CD8-positive, alpha-beta memory T cell (primary cell): ENCODE measurements at regions of chr5 and their contacts with region 1.

Region 1: DNA sequence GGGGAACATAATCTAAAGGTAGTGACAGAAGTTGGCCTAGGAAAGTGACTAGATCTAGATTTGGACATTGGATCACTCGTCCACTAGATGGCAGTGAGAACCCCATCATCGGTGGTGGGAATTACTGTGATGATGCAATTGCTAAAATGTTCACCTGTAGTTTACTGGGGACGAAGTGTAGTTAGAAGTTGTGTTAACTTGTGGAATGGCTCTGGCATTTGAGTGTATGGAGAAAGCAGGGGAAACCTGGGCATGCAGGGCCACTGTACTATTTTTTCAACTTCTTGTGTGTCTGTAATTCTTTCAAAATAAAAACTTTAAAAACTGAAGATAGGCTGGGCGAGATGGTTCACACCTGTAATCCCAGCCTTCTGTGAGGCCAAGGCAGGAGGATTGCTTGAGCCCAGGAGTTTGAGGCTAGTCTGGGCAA is 75.5 kb downstream of the PHAX start:
- DNase-seq: peak; percentile 40 to 77 (median 60)
- H3K4me3 ChIP-seq: no peak overlapping the region
- H3K4me3 Mint-ChIP-seq: no peak overlapping the region
- H3K27ac ChIP-seq: no peak overlapping the region
- H3K27ac Mint-ChIP-seq: no peak overlapping the region
- H3K4me1 ChIP-seq: no peaks in the 10 kb centered on the region
- H3K4me1 Mint-ChIP-seq: peaks cover 3 to 5% (median 4%) of the 10 kb centered on the region in 3 donors
- H3K27me3 ChIP-seq: no peaks in the 10 kb centered on the region
- H3K27me3 Mint-ChIP-seq: peaks cover 0 to 1% of the 10 kb centered on the region in 2 donors

Region 2: DNA sequence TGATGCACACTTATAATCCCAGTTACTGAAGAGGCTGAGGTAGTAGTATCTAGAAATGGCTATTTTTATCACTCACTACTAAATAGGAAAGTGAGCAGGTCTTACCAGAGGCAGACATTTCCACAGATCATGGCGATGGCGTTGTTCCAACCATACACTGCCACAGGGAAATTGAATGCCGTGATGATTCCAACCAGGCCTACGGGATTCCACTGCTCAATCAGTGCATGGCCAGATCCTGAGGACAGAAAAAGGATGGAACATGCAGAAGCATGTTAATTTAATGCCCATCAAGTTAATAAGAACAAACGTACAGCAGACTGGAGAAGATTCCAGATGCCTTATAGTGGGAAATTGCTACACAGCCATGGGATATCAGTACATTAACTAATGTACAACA is 99.2 kb before region 1 on chr5:
- CTCF ChIA-PET with region 1: no interaction called
- POLR2A ChIA-PET with region 1: no interaction called
- DNase-seq: no peak
- H3K4me3 ChIP-seq: no peak overlapping the region
- H3K4me3 Mint-ChIP-seq: no peak overlapping the region
- H3K27ac ChIP-seq: no peak overlapping the region
- H3K27ac Mint-ChIP-seq: no peak overlapping the region
- H3K4me1 ChIP-seq: no peaks in the 10 kb centered on the region
- H3K4me1 Mint-ChIP-seq: no peaks in the 10 kb centered on the region
- H3K27me3 ChIP-seq: no peaks in the 10 kb centered on the region
- H3K27me3 Mint-ChIP-seq: peaks cover 0 to 7% of the 10 kb centered on the region in 2 donors

Region 3: GRCh38 chr5:126656396-126657007 is 19.7 kb before region 1 on chr5:
- CTCF ChIA-PET with region 1: interaction called, 10 read pairs
- POLR2A ChIA-PET with region 1: no interaction called
- DNase-seq: peak in 2 of 5 donors; percentile 4 to 15
- H3K4me3 ChIP-seq: no peak overlapping the region
- H3K4me3 Mint-ChIP-seq: no peak overlapping the region
- H3K27ac ChIP-seq: no peak overlapping the region
- H3K27ac Mint-ChIP-seq: no peak overlapping the region
- H3K4me1 ChIP-seq: no peaks in the 10 kb centered on the region
- H3K4me1 Mint-ChIP-seq: no peaks in the 10 kb centered on the region
- H3K27me3 ChIP-seq: no peaks in the 10 kb centered on the region
- H3K27me3 Mint-ChIP-seq: peaks cover 0 to 3% of the 10 kb centered on the region in 2 donors

Region 4: GRCh38 chr5:126801992-126802294 is 125.7 kb after region 1 on chr5:
- CTCF ChIA-PET with region 1: interaction called, 25 read pairs
- POLR2A ChIA-PET with region 1: interaction called, 3 read pairs
- DNase-seq: peak in 1 of 5 donors; percentile 7
- H3K4me3 ChIP-seq: no peak overlapping the region
- H3K4me3 Mint-ChIP-seq: no peak overlapping the region
- H3K27ac ChIP-seq: no peak overlapping the region
- H3K27ac Mint-ChIP-seq: no peak overlapping the region
- H3K4me1 ChIP-seq: no peaks in the 10 kb centered on the region
- H3K4me1 Mint-ChIP-seq: peaks cover 22 to 50% (median 44%) of the 10 kb centered on the region in 3 donors
- H3K27me3 ChIP-seq: no peaks in the 10 kb centered on the region
- H3K27me3 Mint-ChIP-seq: no peaks in the 10 kb centered on the region

Region 5: DNA sequence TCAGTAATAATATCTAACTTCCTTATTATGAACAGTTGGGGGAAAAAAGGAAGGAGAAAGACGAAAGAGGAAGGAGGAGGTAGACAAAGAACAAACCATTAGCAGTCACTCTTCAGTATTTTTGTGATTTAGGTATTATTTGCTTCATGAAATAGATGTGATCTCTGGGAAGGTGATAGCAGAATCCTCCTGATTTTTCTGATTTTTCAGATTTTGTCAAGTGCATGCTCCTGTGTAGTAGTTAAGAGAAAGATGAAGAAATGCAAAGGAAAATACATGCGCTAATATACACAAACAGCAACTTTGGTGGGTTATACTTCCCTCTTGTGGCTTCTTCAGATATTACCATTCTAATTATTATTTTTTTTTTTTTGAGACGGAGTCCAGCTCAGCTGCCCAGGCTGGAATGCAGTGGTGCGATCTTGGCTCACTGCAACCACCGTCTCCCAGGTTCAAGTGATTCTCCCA is 132.3 kb after region 1 on chr5:
- CTCF ChIA-PET with region 1: interaction called, 25 read pairs
- POLR2A ChIA-PET with region 1: no interaction called
- DNase-seq: peak in 2 of 5 donors; percentile 13 to 18
- H3K4me3 ChIP-seq: no peak overlapping the region
- H3K4me3 Mint-ChIP-seq: no peak overlapping the region
- H3K27ac ChIP-seq: no peak overlapping the region
- H3K27ac Mint-ChIP-seq: peak overlapping the region in 4 of 8 donors; percentile 14 to 73 (median 58)
- H3K4me1 ChIP-seq: peaks cover 18% of the 10 kb centered on the region
- H3K4me1 Mint-ChIP-seq: peaks cover 22 to 41% (median 37%) of the 10 kb centered on the region in 3 donors
- H3K27me3 ChIP-seq: no peaks in the 10 kb centered on the region
- H3K27me3 Mint-ChIP-seq: no peaks in the 10 kb centered on the region

Region 6: GRCh38 chr5:126837906-126838539 is 161.8 kb after region 1 on chr5:
- CTCF ChIA-PET with region 1: no interaction called
- POLR2A ChIA-PET with region 1: no interaction called
- DNase-seq: no peak
- H3K4me3 ChIP-seq: no peak overlapping the region
- H3K4me3 Mint-ChIP-seq: no peak overlapping the region
- H3K27ac ChIP-seq: no peak overlapping the region
- H3K27ac Mint-ChIP-seq: no peak overlapping the region
- H3K4me1 ChIP-seq: no peaks in the 10 kb centered on the region
- H3K4me1 Mint-ChIP-seq: no peaks in the 10 kb centered on the region
- H3K27me3 ChIP-seq: no peaks in the 10 kb centered on the region
- H3K27me3 Mint-ChIP-seq: no peaks in the 10 kb centered on the region

Region 7: DNA sequence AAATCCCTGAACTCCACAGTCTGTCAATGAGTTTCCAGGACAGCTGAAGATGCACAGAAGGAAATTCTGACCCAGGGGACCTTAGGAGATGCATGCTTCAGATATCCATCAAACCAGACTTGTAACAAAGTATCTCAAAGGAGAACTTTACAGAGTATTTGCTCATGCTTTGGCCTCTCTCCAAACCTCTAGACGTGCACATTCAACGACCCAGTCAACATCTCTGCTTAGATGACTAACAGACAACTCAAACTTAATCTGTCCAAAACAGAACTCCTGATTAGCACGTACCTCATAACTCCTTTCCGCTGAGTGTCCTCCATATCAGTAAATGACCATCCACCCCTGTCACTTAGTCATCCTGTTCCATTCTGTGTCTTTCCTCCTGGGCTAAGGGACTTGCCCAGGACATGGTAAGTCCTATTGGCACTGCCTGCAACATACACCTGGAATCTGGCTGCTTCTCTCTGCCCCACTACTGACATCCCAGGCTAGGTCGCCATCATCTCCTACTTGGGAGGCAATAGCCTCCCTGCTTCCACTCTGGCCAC is 208.1 kb after region 1 on chr5:
- CTCF ChIA-PET with region 1: no interaction called
- POLR2A ChIA-PET with region 1: no interaction called
- DNase-seq: no peak
- H3K4me3 ChIP-seq: no peak overlapping the region
- H3K4me3 Mint-ChIP-seq: no peak overlapping the region
- H3K27ac ChIP-seq: peak overlapping the region; percentile 31
- H3K27ac Mint-ChIP-seq: no peak overlapping the region
- H3K4me1 ChIP-seq: no peaks in the 10 kb centered on the region
- H3K4me1 Mint-ChIP-seq: no peaks in the 10 kb centered on the region
- H3K27me3 ChIP-seq: no peaks in the 10 kb centered on the region
- H3K27me3 Mint-ChIP-seq: no peaks in the 10 kb centered on the region